ENCODE measurements at regions of chr2 and their contacts with region 1.

Region 1: GRCh38 chr2:210617732-210618330 is 61.4 kb downstream of the CPS1 start:
- DNase-seq: peak; percentile 64
- ATAC-seq: peak; percentile 81
- H3K4me3 ChIP-seq: no peak overlapping the region
- H3K27ac ChIP-seq: no peak overlapping the region
- H3K4me1 ChIP-seq: no peaks in the 10 kb centered on the region
- H3K27me3 ChIP-seq: no peaks in the 10 kb centered on the region
- CTCF ChIP-seq: peak; percentile 87

Region 2: DNA sequence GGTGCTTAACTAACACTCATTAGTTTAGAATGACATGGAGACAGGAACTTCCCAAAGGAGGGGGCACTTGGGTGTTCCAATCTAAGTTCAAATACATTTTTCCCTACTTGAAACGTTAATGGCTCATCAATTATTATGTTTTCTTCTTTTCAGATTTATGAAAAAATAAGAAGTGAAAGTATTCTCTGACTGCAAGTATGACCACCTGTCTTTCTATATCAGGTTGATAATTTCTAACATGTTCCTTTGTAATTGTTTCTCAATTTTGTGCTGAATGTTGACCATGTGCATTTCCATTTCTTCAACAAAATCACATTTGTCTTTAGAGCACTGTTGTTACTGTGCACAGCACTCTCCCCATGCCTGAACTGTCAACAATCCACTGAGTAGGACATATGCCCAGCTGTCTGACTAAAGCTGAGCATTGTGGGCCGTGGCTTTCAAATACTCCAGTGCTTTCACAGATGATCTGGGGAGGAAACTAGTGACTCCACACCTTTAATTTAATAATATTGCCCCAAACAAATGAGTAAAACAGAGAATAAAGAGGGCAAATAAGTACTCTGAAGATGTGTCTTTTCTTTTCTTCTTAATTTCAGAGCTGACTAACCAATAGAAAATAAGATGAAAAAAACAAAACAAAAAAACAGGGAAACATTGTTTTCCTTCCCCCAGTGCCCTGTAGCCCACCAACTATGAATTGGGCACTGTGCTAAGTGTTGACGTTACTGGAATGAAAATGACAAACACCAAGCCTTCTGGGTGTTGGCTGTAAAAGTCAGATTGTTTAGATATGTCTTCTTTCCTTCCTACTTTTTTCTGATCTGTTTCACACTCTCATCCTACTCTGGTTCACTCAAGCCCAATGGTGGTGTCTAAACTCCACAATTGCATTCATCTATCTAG is 157.3 kb before region 1 on chr2:
- CTCF ChIA-PET with region 1: no interaction called
- POLR2A ChIA-PET with region 1: no interaction called
- intact Hi-C with region 1: no loop called
- DNase-seq: no peak
- ATAC-seq: no peak
- H3K4me3 ChIP-seq: no peak overlapping the region
- H3K27ac ChIP-seq: no peak overlapping the region
- H3K4me1 ChIP-seq: no peaks in the 10 kb centered on the region
- H3K27me3 ChIP-seq: no peaks in the 10 kb centered on the region
- CTCF ChIP-seq: no peak

Region 3: DNA sequence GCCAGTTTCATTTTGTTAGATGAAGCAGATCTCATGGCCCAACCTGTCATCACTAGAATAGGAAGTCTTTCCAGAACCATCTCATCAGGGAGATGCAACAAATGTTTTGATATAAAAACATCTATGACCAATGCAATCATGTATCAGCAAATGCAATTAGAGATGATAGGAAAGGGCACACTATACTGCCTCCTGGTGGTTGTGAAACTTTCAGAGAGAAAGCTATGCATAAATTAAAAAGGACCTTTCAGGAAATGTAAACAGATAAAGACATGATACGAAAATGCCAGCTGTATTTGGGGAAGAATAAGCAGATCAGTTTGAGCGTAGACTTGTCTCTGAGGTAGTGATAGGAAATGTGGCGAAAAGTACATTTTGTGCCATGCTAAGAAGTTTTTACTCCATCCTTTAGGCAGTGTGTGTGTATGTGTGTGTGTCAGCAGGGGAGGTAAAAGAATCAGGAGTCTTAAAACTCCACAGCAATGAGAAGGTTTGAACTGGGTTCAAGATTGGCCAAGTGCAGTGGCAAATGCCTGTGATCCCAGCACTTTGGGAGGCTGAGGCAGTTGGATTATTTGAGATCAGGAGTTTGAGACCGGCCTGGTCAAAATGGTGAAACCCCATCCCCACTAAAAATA is 417.8 kb after region 1 on chr2:
- CTCF ChIA-PET with region 1: interaction called, 3 read pairs
- POLR2A ChIA-PET with region 1: no interaction called
- intact Hi-C with region 1: loop called (anchors 1 kb)
- DNase-seq: peak; percentile 72
- ATAC-seq: peak; percentile 27
- H3K4me3 ChIP-seq: no peak overlapping the region
- H3K27ac ChIP-seq: no peak overlapping the region
- H3K4me1 ChIP-seq: no peaks in the 10 kb centered on the region
- H3K27me3 ChIP-seq: peaks cover 13% of the 10 kb centered on the region; the same call in 1 of the 2 replicates
- CTCF ChIP-seq: peak; percentile 92